ENCODE measurements at regions of chrX and their contacts with region 1.

Region 1: GRCh38 chrX:115584696-115585095 is 23.7 kb downstream of the PLS3 start:
- DNase-seq: no peak
- H3K4me3 Mint-ChIP-seq: no peak overlapping the region
- H3K27ac Mint-ChIP-seq: peak overlapping the region; percentile 44
- H3K4me1 Mint-ChIP-seq: peaks cover 4% of the 10 kb centered on the region
- H3K27me3 Mint-ChIP-seq: no peaks in the 10 kb centered on the region

Region 2: DNA sequence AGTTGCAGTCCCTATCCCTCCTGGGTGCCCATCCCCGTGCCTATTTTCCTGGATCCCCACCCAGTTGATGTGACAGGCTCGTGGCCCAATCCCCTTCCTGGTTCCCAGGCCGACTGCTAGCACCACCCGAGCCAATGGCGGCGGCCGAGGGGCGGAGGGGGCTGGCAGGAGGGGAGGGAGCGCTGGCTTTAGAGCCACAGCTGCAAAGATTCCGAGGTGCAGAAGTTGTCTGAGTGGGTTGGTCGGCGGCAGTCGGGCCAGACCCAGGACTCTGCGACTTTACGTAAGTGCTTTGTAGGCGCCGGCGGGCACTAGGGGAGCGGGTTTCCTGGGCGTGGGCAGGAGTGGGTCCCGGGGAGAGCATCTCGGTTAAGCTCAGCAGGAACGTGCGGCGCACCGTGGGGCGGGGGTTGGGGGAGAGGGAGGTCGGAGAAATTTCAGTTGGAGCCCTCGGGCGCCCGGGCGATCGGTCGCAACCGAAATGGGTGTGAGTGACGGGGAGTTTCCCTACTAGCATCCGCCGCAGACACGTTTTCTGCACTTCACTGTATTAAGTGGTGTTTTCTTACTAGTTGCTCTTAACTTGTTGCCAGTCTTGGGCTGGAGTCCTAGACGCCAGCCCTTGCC is 23.6 kb before region 1 on chrX and contains the start of gene PLS3:
- intact Hi-C with region 1: loop called (anchors 1 kb)
- DNase-seq: peak; percentile 62
- H3K4me3 Mint-ChIP-seq: peak within 1 kb of the TSS; percentile 80
- H3K27ac Mint-ChIP-seq: peak within 1 kb of the TSS; percentile 56
- H3K4me1 Mint-ChIP-seq: no peaks in the 10 kb centered on the region
- H3K27me3 Mint-ChIP-seq: peaks cover 14% of the 10 kb centered on the region
- total RNA-seq, gene PLS3: 5.1 and 6.5 TPM in 2 replicates

Measured in activated CD4-positive, alpha-beta T cell treated with anti-CD3 and anti-CD28 coated beads, Interleukin-2, amount 10 ng/mL, durations not matched to agents 24 days and 14 days (primary cell).